ENCODE measurements at regions of chr14 and their contacts with region 1.

Region 1: GRCh38 chr14:92748259-92749016 is at the start of gene LGMN:
- DNase-seq: peak; percentile 95
- H3K4me3 ChIP-seq: peak within 1 kb of the TSS; percentile 87
- H3K27ac ChIP-seq: no peak within 1 kb of the TSS
- H3K4me1 ChIP-seq: peaks cover 22% of the 10 kb centered on the region
- CTCF ChIP-seq: no peak
- total RNA-seq, gene LGMN: 24.8 and 27.7 TPM in 2 replicates

Region 2: DNA sequence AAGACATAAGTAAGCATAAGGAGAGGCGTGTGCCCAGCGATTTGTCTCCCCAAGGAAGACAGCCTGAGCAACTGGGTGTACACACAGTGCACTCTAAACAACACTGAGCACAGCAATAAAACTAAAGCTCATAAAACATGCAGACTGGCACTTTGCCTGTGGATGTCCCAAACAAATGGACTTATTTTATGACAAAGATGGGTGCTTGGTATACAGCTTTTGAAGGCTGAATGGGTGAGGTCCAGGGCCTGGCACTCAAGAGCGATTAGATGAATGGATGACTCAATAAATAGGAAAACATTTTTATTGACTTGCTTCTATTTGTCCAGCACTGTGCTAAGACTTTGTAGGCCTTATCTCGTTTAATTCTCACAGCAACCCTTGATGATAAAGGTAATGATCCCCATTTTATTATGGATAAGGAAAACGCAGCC is 28.5 kb before region 1 on chr14:
- CTCF ChIA-PET with region 1: no interaction called
- POLR2A ChIA-PET with region 1: no interaction called
- intact Hi-C with region 1: loop called (anchors 2 kb)
- DNase-seq: no peak
- H3K4me3 ChIP-seq: no peak overlapping the region
- H3K27ac ChIP-seq: no peak overlapping the region
- H3K4me1 ChIP-seq: no peaks in the 10 kb centered on the region
- CTCF ChIP-seq: no peak

Region 3: GRCh38 chr14:92793709-92794546 is 45.5 kb after region 1 on chr14 and contains the start of gene GOLGA5:
- CTCF ChIA-PET with region 1: no interaction called
- POLR2A ChIA-PET with region 1: interaction called, 4 read pairs
- intact Hi-C with region 1: loop called (anchors 5 kb)
- DNase-seq: peak; percentile 98
- H3K4me3 ChIP-seq: peak within 1 kb of the TSS; percentile 96
- H3K27ac ChIP-seq: peak within 1 kb of the TSS; percentile 43
- H3K4me1 ChIP-seq: peaks cover 19% of the 10 kb centered on the region
- CTCF ChIP-seq: no peak
- total RNA-seq, gene GOLGA5: 13.3 and 15.4 TPM in 2 replicates

Region 4: GRCh38 chr14:92832137-92832700 is 83.8 kb after region 1 on chr14:
- CTCF ChIA-PET with region 1: no interaction called
- POLR2A ChIA-PET with region 1: no interaction called
- intact Hi-C with region 1: no loop called
- DNase-seq: no peak
- H3K4me3 ChIP-seq: no peak overlapping the region
- H3K27ac ChIP-seq: no peak overlapping the region
- H3K4me1 ChIP-seq: no peaks in the 10 kb centered on the region
- CTCF ChIP-seq: no peak